CD8-positive, alpha-beta T cell (primary cell): ENCODE measurements at regions of chr5 and their contacts with region 1.

Region 1: DNA sequence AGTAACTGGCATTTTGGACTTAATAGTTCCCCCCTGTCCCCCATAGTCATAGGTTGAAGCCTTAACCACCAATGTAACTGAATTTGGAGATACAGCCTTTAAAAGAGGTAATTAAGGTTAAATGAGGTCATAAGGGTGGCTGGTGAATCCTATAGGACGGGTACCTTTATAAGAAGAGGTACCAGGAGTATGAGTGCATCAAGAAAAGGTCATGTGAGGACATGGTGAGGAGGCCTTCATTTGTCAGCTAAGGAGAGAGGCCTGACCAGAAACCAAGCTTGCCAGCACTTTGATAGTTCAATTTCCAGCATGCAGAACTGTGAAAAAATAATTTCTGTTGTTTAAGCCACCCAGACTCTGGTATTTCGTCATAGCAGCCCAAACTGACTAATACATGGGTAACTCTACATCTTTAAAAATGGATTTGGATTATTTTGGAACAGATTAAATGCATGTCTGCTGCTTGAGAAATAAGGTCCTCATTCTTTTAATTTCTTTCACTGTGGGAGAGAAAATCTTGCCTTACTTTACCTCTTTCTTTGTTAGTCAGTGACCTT is 9.7 kb downstream of the RASA1 start:
- DNase-seq: no peak
- ATAC-seq: no peak
- H3K4me3 ChIP-seq: no peak overlapping the region
- H3K4me3 Mint-ChIP-seq: no peak overlapping the region
- H3K27ac ChIP-seq: no peak overlapping the region
- H3K27ac Mint-ChIP-seq: peak overlapping the region; percentile 45
- H3K4me1 ChIP-seq: peaks cover 12% of the 10 kb centered on the region
- H3K4me1 Mint-ChIP-seq: peaks cover 71% of the 10 kb centered on the region
- H3K27me3 ChIP-seq: no peaks in the 10 kb centered on the region
- H3K27me3 Mint-ChIP-seq: no peaks in the 10 kb centered on the region
- CTCF ChIP-seq: no peak

Region 2: DNA sequence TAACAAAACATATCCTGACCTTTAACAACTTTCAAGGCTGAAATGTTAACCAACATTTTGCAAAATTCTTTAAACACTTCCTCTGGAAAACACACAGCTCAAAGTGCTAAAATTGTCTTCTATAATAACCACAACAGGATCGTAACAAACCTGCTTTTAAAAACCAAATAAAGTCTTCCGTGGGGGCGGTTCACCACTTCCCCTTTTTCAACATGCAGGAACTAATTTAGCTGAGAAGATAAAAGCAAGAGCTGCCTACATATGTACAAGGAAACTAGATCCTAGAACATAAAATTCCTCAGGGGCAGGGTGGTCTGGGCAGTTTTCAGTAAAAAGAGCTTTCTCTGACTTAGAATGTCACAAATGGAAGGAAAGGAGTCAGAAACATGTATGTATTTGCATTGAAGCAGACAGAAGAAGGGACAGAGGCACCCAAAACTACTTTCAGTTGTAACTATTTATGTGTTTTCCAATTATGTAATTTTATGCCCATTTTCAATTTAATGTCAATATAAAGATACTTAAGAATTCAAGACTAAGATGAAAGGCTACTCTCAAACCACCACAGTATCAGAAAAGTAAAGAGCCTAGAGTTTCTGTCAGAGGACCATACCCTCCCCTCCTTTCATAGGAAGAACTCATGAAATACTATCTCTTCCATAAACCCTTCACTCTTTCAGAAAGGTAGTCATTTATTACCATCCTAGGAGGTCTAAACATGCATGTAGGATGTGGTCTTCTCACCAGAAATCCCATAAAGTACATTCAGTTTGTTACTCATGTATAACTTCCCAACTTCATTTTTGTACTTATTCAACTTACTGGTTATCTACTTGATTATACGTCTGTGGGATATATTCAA is 195.6 kb before region 1 on chr5:
- CTCF ChIA-PET with region 1: no interaction called
- POLR2A ChIA-PET with region 1: no interaction called
- intact Hi-C with region 1: loop called in 1 of 2 experiments (anchors 5 kb)
- DNase-seq: peak in 8 of 9 experiments; percentile 9 to 72 (median 38)
- ATAC-seq: peak; percentile 64
- H3K4me3 ChIP-seq: peak overlapping the region in 1 of 2 experiments; percentile 4
- H3K4me3 Mint-ChIP-seq: peak overlapping the region; percentile 68
- H3K27ac ChIP-seq: peak overlapping the region in 1 of 2 experiments; percentile 56
- H3K27ac Mint-ChIP-seq: peak overlapping the region; percentile 64
- H3K4me1 ChIP-seq: peaks cover 39% of the 10 kb centered on the region
- H3K4me1 Mint-ChIP-seq: peaks cover 58% of the 10 kb centered on the region
- H3K27me3 ChIP-seq: no peaks in the 10 kb centered on the region
- H3K27me3 Mint-ChIP-seq: no peaks in the 10 kb centered on the region
- CTCF ChIP-seq: no peak

Region 3: DNA sequence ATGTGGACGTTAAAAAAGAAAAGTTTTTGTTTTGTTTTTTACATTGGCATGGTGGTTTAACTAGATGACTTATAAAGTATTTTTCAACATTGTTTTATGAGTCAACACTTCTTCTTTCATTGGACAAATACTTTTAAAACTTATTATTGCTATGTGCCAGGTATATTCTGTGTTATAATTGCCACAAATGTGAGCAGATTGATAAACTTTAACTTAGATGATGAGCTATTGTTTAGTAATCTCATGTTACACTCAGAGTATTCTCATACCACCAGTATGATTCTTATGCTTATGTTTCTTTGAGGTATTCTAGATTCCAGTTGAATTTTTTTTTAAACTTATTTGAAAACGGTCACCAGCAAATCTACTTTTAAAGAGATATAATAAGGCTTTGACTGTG is 50.6 kb after region 1 on chr5:
- CTCF ChIA-PET with region 1: no interaction called
- POLR2A ChIA-PET with region 1: no interaction called
- intact Hi-C with region 1: loop called (anchors 1 to 5 kb)
- DNase-seq: no peak
- ATAC-seq: no peak
- H3K4me3 ChIP-seq: no peak overlapping the region
- H3K4me3 Mint-ChIP-seq: no peak overlapping the region
- H3K27ac ChIP-seq: no peak overlapping the region
- H3K27ac Mint-ChIP-seq: peak overlapping the region; percentile 43
- H3K4me1 ChIP-seq: peaks cover under 1% of the 10 kb centered on the region
- H3K4me1 Mint-ChIP-seq: peaks cover 62% of the 10 kb centered on the region
- H3K27me3 ChIP-seq: no peaks in the 10 kb centered on the region
- H3K27me3 Mint-ChIP-seq: no peaks in the 10 kb centered on the region
- CTCF ChIP-seq: no peak

Region 4: DNA sequence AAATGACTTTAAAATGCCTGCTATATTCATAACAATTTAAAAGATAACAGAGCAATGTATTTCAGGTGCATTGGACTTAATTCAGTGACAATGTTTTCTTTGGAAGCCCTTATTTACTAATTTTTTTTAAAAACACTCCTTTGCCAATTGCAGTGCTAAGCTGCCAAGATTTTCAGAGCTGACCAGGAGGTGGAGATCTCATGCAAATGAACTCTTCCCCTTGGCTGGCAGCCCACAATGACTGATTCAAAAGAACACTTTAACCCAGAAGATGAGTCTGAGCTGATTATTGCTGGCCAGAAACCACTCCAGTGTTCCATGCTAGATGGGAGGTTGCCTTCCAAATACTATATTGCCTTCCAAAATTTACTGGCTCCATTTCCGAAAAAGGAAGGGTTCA is 263.7 kb after region 1 on chr5:
- CTCF ChIA-PET with region 1: no interaction called
- POLR2A ChIA-PET with region 1: no interaction called
- intact Hi-C with region 1: no loop called
- DNase-seq: no peak
- ATAC-seq: no peak
- H3K4me3 ChIP-seq: no peak overlapping the region
- H3K4me3 Mint-ChIP-seq: no peak overlapping the region
- H3K27ac ChIP-seq: no peak overlapping the region
- H3K27ac Mint-ChIP-seq: no peak overlapping the region
- H3K4me1 ChIP-seq: no peaks in the 10 kb centered on the region
- H3K4me1 Mint-ChIP-seq: no peaks in the 10 kb centered on the region
- H3K27me3 ChIP-seq: no peaks in the 10 kb centered on the region
- H3K27me3 Mint-ChIP-seq: peaks cover 5% of the 10 kb centered on the region
- CTCF ChIP-seq: no peak